Activated T-helper 1 cell treated with anti-CD3 and anti-CD28 coated beads, Interleukin-12 subunit alpha, Interleukin-12 subunit beta, Interleukin-2, Interleukin-4 antibody, amounts not matched to agents 30 ng/mL and 10 ng/mL and 1 ng/mL, durations not matched to agents 14 hours and 24 hours and 36 hours (primary cell): ENCODE measurements at regions of chr2 and their contacts with region 1.

Region 1: GRCh38 chr2:168490015-168490874 is 34.2 kb downstream of the CERS6 start:
- DNase-seq: peak; percentile 45
- H3K4me3 Mint-ChIP-seq: peak overlapping the region; percentile 78
- H3K27ac Mint-ChIP-seq: peak overlapping the region; percentile 92
- H3K4me1 Mint-ChIP-seq: peaks cover 42% of the 10 kb centered on the region
- H3K27me3 Mint-ChIP-seq: peaks cover 9% of the 10 kb centered on the region

Region 2: GRCh38 chr2:168210895-168211570 is 279.2 kb before region 1 on chr2:
- intact Hi-C with region 1: loop called (anchors 1 kb)
- DNase-seq: no peak
- H3K4me3 Mint-ChIP-seq: peak overlapping the region; percentile 28
- H3K27ac Mint-ChIP-seq: peak overlapping the region; percentile 85
- H3K4me1 Mint-ChIP-seq: peaks cover 53% of the 10 kb centered on the region
- H3K27me3 Mint-ChIP-seq: no peaks in the 10 kb centered on the region

Region 3: DNA sequence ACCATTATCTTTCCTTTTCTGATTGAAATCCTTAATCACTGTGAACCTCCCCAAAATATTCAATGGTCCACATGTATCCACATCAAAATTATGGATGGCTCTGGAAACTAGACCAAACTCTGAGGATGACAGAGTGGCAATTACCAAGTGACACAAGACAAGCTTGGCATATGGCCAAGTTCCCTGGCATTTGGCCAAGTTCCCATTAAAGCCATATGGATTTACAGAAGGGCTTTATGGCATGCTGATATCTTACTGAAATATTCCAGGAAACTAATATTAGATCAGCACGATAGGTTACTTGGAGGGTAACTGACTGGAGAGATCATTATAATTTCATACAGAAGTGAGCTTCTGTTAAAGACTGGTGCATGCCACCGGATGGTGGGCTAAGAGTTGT is 56.1 kb before region 1 on chr2:
- intact Hi-C with region 1: loop called (anchors 1 kb)
- DNase-seq: no peak
- H3K4me3 Mint-ChIP-seq: no peak overlapping the region
- H3K27ac Mint-ChIP-seq: no peak overlapping the region
- H3K4me1 Mint-ChIP-seq: peaks cover 44% of the 10 kb centered on the region
- H3K27me3 Mint-ChIP-seq: peaks cover 2% of the 10 kb centered on the region

Region 4: GRCh38 chr2:168536925-168537466 is 46.8 kb after region 1 on chr2:
- intact Hi-C with region 1: loop called (anchors 1 kb)
- DNase-seq: no peak
- H3K4me3 Mint-ChIP-seq: no peak overlapping the region
- H3K27ac Mint-ChIP-seq: no peak overlapping the region
- H3K4me1 Mint-ChIP-seq: peaks cover 44% of the 10 kb centered on the region
- H3K27me3 Mint-ChIP-seq: no peaks in the 10 kb centered on the region

Region 5: GRCh38 chr2:168632709-168633121 is 142.5 kb after region 1 on chr2:
- intact Hi-C with region 1: loop called (anchors 5 kb)
- DNase-seq: no peak
- H3K4me3 Mint-ChIP-seq: no peak overlapping the region
- H3K27ac Mint-ChIP-seq: no peak overlapping the region
- H3K4me1 Mint-ChIP-seq: no peaks in the 10 kb centered on the region
- H3K27me3 Mint-ChIP-seq: no peaks in the 10 kb centered on the region

Region 6: GRCh38 chr2:168751104-168751740 is 261.0 kb after region 1 on chr2:
- intact Hi-C with region 1: loop called (anchors 5 kb)
- DNase-seq: peak; percentile 12
- H3K4me3 Mint-ChIP-seq: peak overlapping the region; percentile 24
- H3K27ac Mint-ChIP-seq: peak overlapping the region; percentile 42
- H3K4me1 Mint-ChIP-seq: peaks cover 50% of the 10 kb centered on the region
- H3K27me3 Mint-ChIP-seq: no peaks in the 10 kb centered on the region